ENCODE measurements at regions of chr4 and their contacts with region 1.

Region 1: GRCh38 chr4:152485726-152486276 is 50.1 kb downstream of the FBXW7 start:
- DNase-seq: no peak

Region 2: DNA sequence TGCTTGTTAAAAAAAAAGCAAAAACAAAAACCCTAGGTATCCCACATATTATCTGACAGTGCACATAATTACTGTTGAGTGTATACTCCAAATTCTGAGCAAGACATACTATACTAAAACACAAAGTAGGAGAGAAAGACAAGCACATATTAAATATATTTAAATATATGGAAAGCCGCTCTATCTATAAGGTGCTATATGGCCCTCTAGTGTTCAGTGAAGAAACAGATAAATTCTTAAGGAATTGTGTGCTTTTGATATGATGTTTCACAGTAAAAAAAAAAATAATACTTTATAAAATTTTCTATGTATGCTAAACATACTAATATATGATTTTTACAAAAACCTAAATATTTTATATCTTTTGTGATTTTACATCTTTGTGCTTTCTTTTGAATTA is 87.7 kb before region 1 on chr4:
- CTCF ChIA-PET with region 1: no interaction called
- POLR2A ChIA-PET with region 1: no interaction called
- DNase-seq: peak; percentile 9

Region 3: GRCh38 chr4:152436384-152436783 is 49.4 kb before region 1 on chr4:
- CTCF ChIA-PET with region 1: interaction called, 14 read pairs
- POLR2A ChIA-PET with region 1: no interaction called
- DNase-seq: no peak

Measured in HEK293T (cell line).